ENCODE measurements at regions of chr4 and their contacts with region 1.

Region 1: GRCh38 chr4:44448548-44449461 is at the start of gene KCTD8:
- DNase-seq: peak; percentile 50
- H3K4me3 Mint-ChIP-seq: peak within 1 kb of the TSS; percentile 63
- H3K27ac Mint-ChIP-seq: no peak within 1 kb of the TSS
- H3K4me1 Mint-ChIP-seq: peaks cover 5% of the 10 kb centered on the region
- H3K27me3 Mint-ChIP-seq: peaks cover 47% of the 10 kb centered on the region
- total RNA-seq, gene KCTD8: not detected in 2 replicates

Region 2: DNA sequence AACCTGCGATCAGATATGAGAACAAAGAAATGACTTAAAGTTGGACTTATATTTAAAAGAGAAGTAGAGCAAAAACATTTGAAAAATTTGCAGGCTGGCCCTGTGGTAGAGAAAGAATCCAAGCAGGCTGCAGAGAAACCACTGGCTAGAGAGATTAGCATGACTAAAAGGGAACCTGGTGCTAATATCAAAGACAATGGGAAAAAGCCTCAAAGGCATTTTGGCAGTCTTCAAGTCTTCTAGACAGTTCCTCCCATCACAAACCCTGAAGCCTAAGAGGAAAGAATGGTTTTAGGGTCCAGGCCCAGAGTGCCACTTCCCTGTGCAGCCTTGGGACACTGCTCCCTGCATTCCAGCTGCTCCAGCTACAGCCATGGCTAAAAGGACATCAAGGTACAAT is 33.6 kb before region 1 on chr4:
- intact Hi-C with region 1: no loop called
- DNase-seq: no peak
- H3K4me3 Mint-ChIP-seq: no peak overlapping the region
- H3K27ac Mint-ChIP-seq: no peak overlapping the region
- H3K4me1 Mint-ChIP-seq: no peaks in the 10 kb centered on the region
- H3K27me3 Mint-ChIP-seq: no peaks in the 10 kb centered on the region

Region 3: GRCh38 chr4:44629280-44629866 is 180.6 kb after region 1 on chr4:
- intact Hi-C with region 1: loop called (anchors 1 kb)
- DNase-seq: peak; percentile 13
- H3K4me3 Mint-ChIP-seq: no peak overlapping the region
- H3K27ac Mint-ChIP-seq: no peak overlapping the region
- H3K4me1 Mint-ChIP-seq: no peaks in the 10 kb centered on the region
- H3K27me3 Mint-ChIP-seq: no peaks in the 10 kb centered on the region

Region 4: DNA sequence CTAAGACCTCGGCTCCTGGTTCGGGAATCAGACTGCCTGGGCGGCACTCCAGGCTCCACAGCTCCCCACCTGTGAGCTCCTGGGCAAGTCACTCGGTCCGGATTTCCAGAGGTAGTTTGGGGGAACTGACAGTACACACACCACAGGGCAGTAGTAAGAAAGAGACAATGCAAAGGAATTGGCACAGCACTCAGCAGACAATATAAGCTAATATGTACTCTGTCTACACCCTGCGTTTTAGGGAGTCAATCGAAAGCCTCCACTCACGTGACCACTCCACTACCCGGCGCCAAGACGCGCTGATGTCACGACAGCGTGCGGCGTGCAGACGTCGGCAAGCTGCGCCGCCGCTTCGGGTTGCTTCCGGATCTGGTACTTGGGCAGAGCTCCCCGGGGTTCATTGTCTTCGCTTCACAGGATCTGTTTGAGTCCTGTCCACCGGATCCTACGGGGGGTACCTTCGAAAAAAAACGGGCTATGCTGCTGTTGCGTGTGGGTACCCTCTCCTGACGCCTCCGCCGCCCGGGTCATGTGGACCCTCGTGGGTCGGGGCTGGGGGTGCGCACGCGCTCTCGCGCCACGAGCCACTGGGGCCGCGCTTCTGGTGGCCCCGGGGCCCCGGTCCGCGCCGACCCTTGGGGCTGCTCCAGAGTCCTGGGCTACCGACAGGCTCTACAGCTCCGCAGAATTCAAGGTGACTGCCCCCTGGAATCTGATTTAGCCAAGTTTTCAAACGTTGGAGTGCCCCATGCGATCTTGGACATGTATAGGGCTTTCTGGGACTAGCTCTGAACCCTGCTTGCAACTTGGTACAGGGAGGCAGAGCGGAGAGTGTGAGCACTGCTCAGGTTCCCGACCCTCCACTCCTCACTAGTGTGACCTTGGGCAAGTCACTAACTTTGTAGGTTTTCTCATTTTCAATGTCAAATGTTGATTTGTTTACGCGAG is 229.6 kb after region 1 on chr4 and contains the start of gene GUF1:
- intact Hi-C with region 1: loop called (anchors 1 kb)
- DNase-seq: peak; percentile 86
- H3K4me3 Mint-ChIP-seq: peak within 1 kb of the TSS; percentile 89
- H3K27ac Mint-ChIP-seq: peak within 1 kb of the TSS; percentile 93
- H3K4me1 Mint-ChIP-seq: peaks cover 29% of the 10 kb centered on the region
- H3K27me3 Mint-ChIP-seq: peaks cover 2% of the 10 kb centered on the region
- total RNA-seq, gene GUF1: 37.5 and 39.2 TPM in 2 replicates

Region 5: GRCh38 chr4:45043911-45044310 is 595.1 kb after region 1 on chr4:
- intact Hi-C with region 1: no loop called
- DNase-seq: no peak
- H3K4me3 Mint-ChIP-seq: no peak overlapping the region
- H3K27ac Mint-ChIP-seq: no peak overlapping the region
- H3K4me1 Mint-ChIP-seq: no peaks in the 10 kb centered on the region
- H3K27me3 Mint-ChIP-seq: no peaks in the 10 kb centered on the region

Measured in activated T-helper 1 cell treated with anti-CD3 and anti-CD28 coated beads, Interleukin-12 subunit alpha, Interleukin-12 subunit beta, Interleukin-2, Interleukin-4 antibody, amounts not matched to agents 30 ng/mL and 10 ng/mL and 1 ng/mL, durations not matched to agents 14 hours and 24 hours and 36 hours (primary cell).